ENCODE measurements at regions of chr7 and their contacts with region 1.

Region 1: GRCh38 chr7:76020031-76020714 is 25.8 kb upstream of the TMEM120A start:
- DNase-seq: peak; percentile 93

Region 2: DNA sequence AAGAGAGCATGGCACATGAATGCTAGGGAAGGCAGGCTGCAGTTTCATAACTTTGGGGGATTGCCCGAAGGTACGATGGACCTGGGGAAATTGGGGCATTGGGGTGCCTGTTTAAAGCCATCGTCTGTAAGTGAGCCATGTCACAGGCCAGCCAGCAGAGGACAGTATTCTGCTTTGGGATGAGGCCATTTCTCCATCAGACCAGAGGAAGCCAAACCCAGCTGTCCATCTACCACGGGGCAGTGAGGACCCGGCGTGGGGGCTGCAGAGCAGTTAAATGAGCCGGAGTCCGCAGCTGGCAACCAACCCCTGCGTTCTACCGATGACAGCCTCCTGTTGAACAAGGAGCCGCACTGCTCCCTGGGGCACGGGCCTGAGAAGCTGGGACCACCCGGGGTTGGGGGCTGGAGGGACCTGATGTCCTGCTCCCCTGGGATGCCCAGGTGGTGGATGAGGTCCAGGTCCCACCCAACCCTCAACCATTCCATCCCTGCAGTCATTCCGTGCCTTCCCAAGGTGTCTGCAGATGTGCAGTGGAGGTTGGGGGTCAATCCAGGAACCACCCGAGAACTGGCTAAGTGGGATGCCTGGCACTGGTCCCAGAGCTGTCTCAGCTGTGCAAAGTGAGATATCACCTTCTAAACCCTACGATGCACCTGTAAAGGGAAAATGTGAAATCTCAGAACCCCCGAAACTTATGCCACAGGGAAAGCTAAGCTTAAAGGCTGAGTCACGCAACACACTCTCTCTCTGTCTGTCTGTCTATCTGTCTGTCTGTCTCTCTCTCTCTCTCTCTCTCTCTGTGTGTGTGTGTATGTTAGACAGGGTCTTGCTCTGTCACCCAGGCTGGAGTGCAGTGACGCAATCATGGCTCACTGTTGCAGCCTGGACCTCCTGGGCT is 153.4 kb before region 1 on chr7:
- intact Hi-C with region 1: loop called in 1 of 2 experiments (anchors 2 kb)
- DNase-seq: peak; percentile 86

Region 3: GRCh38 chr7:77631820-77632219 is 1611.6 kb after region 1 on chr7:
- intact Hi-C with region 1: no loop called
- DNase-seq: no peak

Measured in posterior vena cava (tissue), 2 donors.